Posterior vena cava (tissue), 2 donors: ENCODE measurements at regions of chr5 and their contacts with region 1.

Region 1: GRCh38 chr5:141564216-141564692 is 54.5 kb downstream of the DIAPH1 start:
- DNase-seq: no peak

Region 2: GRCh38 chr5:141320225-141321169 is 243.8 kb before region 1 on chr5 and contains the start of gene TAF7:
- intact Hi-C with region 1: loop called in 1 of 2 experiments (anchors 10 kb)
- DNase-seq: peak; percentile 98
- total RNA-seq, gene TAF7: 57.9 to 63.1 TPM

Region 3: DNA sequence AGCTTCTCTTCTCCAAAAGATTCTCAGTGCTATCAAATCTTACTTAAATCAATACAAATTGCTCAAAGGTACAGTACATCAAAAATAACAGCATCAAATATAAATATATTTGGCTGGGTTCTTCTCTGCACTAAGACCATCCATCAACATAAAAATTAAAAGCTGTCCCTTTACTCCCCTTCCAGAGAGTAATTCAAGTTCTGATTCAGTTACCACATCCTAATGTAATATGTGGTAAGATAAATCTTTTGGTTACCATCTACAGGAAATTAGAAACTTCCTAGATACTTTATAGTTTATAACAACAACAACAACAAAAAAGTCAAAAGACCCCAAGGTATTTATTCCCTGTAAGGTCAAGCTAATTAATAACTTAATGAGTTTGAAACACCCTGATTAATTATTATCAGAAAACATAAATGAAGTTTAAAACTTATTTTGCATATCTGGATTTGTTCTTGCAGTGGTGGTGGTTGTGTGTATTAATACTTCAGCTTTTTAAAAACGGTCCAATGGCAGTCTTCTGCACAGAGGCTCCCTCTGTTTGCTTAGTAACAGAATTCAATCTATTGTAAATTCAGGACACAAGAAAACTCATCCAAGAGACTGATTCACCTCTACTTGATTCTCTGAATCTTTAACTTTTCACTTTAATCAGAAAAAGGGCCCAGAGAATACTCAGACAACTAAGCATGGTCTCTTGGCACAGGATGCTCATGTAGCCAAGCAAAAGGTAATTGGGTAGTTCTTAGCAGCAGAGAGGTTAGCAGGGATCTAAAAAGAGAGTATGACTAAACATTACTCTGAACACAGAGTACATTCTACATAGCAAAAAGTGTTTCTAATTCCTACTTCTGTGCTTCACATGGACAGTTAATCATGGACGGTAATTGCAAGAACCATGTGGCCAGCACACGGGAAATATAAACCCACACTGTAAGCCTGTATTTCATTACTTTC is 34.4 kb after region 1 on chr5:
- intact Hi-C with region 1: no loop called
- DNase-seq: no peak

Region 4: GRCh38 chr5:142453932-142454331 is 889.7 kb after region 1 on chr5:
- intact Hi-C with region 1: no loop called
- DNase-seq: no peak